Ovary (tissue), 10 donors: ENCODE measurements at regions of chr6 and their contacts with region 1.

Region 1: DNA sequence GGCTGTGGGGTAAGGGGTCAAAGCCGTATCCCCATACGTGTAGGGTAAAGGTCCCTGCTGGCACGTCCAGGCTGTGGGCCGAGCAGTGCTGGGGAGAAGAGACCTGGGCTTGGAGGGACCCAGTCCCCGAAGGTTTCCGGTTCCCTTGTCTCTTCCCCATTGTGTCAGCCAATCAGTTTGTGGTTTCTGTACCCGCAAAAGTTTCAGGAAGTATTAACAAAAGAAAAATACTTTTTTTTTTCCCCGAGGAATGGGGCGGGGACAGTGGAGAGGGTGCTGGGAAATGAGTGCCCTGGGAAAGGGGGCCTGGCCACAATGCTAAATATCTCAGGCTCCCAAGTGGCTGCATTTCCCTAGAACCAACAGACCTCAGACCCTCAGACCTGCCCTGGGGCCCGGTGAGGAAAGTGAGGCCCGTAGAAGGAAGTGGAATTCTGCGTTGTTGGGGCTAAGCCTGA is 15.2 kb upstream of the AMD1 start:
- DNase-seq: no peak
- H3K4me3 ChIP-seq: no peak overlapping the region
- H3K27ac ChIP-seq: no peak overlapping the region
- H3K4me1 ChIP-seq: no peaks in the 10 kb centered on the region
- H3K27me3 ChIP-seq: no peaks in the 10 kb centered on the region
- CTCF ChIP-seq: no peak
- EP300 ChIP-seq: no peak
- POLR2A ChIP-seq: no peak

Region 2: GRCh38 chr6:110841266-110841665 is 18.1 kb before region 1 on chr6:
- intact Hi-C with region 1: no loop called
- DNase-seq: no peak
- H3K4me3 ChIP-seq: no peak overlapping the region
- H3K27ac ChIP-seq: no peak overlapping the region
- H3K4me1 ChIP-seq: no peaks in the 10 kb centered on the region
- H3K27me3 ChIP-seq: no peaks in the 10 kb centered on the region
- CTCF ChIP-seq: no peak
- EP300 ChIP-seq: no peak
- POLR2A ChIP-seq: no peak

Region 3: GRCh38 chr6:111129013-111129412 is 269.6 kb after region 1 on chr6:
- intact Hi-C with region 1: no loop called
- DNase-seq: peak; percentile 24 to 71 (median 51)
- H3K4me3 ChIP-seq: no peak overlapping the region
- H3K27ac ChIP-seq: no peak overlapping the region
- H3K4me1 ChIP-seq: no peaks in the 10 kb centered on the region
- H3K27me3 ChIP-seq: no peaks in the 10 kb centered on the region
- CTCF ChIP-seq: no peak
- EP300 ChIP-seq: no peak
- POLR2A ChIP-seq: no peak

Region 4: DNA sequence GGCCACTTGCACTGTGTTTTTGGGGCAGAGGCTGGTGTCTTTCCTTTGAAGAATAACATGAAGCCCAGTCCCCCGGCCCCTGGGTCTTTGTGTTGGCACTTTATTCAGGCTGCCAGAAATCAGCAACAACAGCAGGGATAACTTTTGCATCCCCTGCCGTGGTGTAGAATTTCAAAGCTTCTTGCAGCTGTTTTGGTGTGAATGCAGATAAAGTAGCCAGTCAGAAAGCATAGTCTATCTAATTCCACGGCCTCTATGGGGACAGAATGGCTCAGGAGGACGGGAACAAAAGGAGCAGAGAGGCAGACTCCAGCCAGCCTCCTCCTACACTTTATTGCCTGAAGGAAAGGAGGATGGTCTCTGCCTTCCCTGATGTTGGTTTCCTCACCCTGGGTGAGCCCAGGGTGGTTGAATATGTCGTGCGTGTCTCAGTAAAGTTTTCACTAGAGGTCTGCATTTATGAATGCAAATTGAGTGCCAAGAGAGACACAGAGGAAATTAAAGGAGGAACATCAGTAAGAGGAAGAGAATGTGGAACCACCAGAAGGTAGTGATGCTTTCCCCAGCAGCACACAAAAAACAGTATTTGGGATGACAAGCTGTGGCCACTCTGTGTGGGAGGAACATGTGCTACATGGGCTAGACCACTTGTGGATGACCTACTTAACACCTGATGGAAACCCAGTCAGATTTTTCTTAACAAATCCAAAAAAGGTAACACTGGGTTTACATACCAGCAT is 872.3 kb after region 1 on chr6:
- intact Hi-C with region 1: loop called in 1 of 4 experiments (anchors 5 kb)
- DNase-seq: no peak
- H3K4me3 ChIP-seq: no peak overlapping the region
- H3K27ac ChIP-seq: peak overlapping the region in 1 of 2 donors; percentile 50
- H3K4me1 ChIP-seq: peaks cover 21% of the 10 kb centered on the region
- H3K27me3 ChIP-seq: no peaks in the 10 kb centered on the region
- CTCF ChIP-seq: no peak
- EP300 ChIP-seq: no peak
- POLR2A ChIP-seq: no peak